IMR-90 (cell line): ENCODE measurements at regions of chr21 and their contacts with region 1.

Region 1: GRCh38 chr21:34888569-34889319 is 160.4 kb downstream of the RUNX1 start:
- DNase-seq: peak; percentile 96
- ATAC-seq: peak; percentile 62
- H3K4me3 ChIP-seq: peak overlapping the region; percentile 99
- H3K27ac ChIP-seq: peak overlapping the region; percentile 99
- H3K4me1 ChIP-seq: no peaks in the 10 kb centered on the region
- H3K27me3 ChIP-seq: no peaks in the 10 kb centered on the region
- CTCF ChIP-seq: no peak
- POLR2A ChIP-seq: peak; percentile 98
- RAD21 ChIP-seq: peak; percentile 25

Region 2: DNA sequence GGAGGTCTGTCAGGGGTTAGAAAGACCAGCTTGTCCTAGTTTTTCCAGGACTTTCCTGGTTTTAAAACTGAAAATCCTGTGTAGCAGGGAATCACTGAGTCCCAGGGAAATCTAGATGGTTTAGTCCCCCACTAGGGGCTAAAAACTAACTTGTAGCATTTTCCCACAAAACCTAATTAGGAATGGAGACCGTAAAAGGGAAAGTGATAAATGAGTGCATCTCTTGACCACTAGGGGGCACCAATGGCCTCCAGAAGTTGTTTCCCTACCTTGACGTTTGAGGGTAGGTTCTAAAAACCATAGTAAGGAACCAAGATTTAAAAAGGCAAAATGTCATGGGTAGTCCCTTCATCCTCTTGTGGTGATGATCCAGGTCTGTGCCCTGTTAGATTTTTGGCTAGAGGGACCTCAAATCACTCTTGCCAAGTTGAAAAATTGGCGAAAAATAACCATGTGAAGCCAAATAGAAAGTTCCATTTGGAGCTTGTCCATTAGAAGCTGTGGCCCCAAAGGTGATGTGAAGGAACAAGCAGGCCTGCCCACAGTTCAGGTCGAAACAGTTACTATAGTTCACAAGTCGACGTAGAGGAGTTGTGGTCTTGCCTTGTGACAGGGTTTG is 195.4 kb before region 1 on chr21:
- CTCF ChIA-PET with region 1: no interaction called
- POLR2A ChIA-PET with region 1: no interaction called
- dilution Hi-C with region 1: no loop called
- in situ Hi-C with region 1: no loop called
- intact Hi-C with region 1: loop called (anchors 2 kb)
- DNase-seq: peak; percentile 74
- ATAC-seq: peak; percentile 80
- H3K4me3 ChIP-seq: no peak overlapping the region
- H3K27ac ChIP-seq: no peak overlapping the region
- H3K4me1 ChIP-seq: no peaks in the 10 kb centered on the region
- H3K27me3 ChIP-seq: peaks cover 36% of the 10 kb centered on the region
- CTCF ChIP-seq: peak; percentile 84
- POLR2A ChIP-seq: no peak
- RAD21 ChIP-seq: peak; percentile 89

Region 3: GRCh38 chr21:34801519-34802132 is 87.1 kb before region 1 on chr21:
- CTCF ChIA-PET with region 1: no interaction called
- POLR2A ChIA-PET with region 1: no interaction called
- dilution Hi-C with region 1: no loop called
- in situ Hi-C with region 1: no loop called
- intact Hi-C with region 1: loop called (anchors 5 kb)
- DNase-seq: no peak
- ATAC-seq: no peak; the same call in 1 of the 2 replicates
- H3K4me3 ChIP-seq: no peak overlapping the region
- H3K27ac ChIP-seq: no peak overlapping the region
- H3K4me1 ChIP-seq: peaks cover 7% of the 10 kb centered on the region
- H3K27me3 ChIP-seq: no peaks in the 10 kb centered on the region
- CTCF ChIP-seq: peak; percentile 28; the same call in 1 of the 2 replicates
- POLR2A ChIP-seq: no peak
- RAD21 ChIP-seq: 0 out of 2 replicates have a peak, but pooled peaks have one; percentile 13

Region 4: GRCh38 chr21:34871026-34871908 is 17.5 kb before region 1 on chr21:
- CTCF ChIA-PET with region 1: no interaction called
- POLR2A ChIA-PET with region 1: no interaction called
- dilution Hi-C with region 1: no loop called
- in situ Hi-C with region 1: no loop called
- intact Hi-C with region 1: no loop called
- DNase-seq: no peak
- ATAC-seq: no peak
- H3K4me3 ChIP-seq: no peak overlapping the region
- H3K27ac ChIP-seq: no peak overlapping the region
- H3K4me1 ChIP-seq: peaks cover 28% of the 10 kb centered on the region
- H3K27me3 ChIP-seq: no peaks in the 10 kb centered on the region
- CTCF ChIP-seq: no peak
- POLR2A ChIP-seq: peak; percentile 17; the same call in 1 of the 2 replicates
- RAD21 ChIP-seq: no peak

Region 5: GRCh38 chr21:35084869-35085268 is 196.1 kb after region 1 on chr21:
- CTCF ChIA-PET with region 1: no interaction called
- POLR2A ChIA-PET with region 1: no interaction called
- dilution Hi-C with region 1: no loop called
- in situ Hi-C with region 1: no loop called
- intact Hi-C with region 1: loop called (anchors 2 kb)
- DNase-seq: peak; percentile 99
- ATAC-seq: peak; percentile 88
- H3K4me3 ChIP-seq: no peak overlapping the region
- H3K27ac ChIP-seq: peak overlapping the region; percentile 65; the same call in 1 of the 2 replicates
- H3K4me1 ChIP-seq: peaks cover 10% of the 10 kb centered on the region
- H3K27me3 ChIP-seq: no peaks in the 10 kb centered on the region
- CTCF ChIP-seq: peak; percentile 31
- POLR2A ChIP-seq: no peak
- RAD21 ChIP-seq: no peak

Region 6: GRCh38 chr21:35198031-35198431 is 309.3 kb after region 1 on chr21:
- CTCF ChIA-PET with region 1: no interaction called
- POLR2A ChIA-PET with region 1: no interaction called
- dilution Hi-C with region 1: no loop called
- in situ Hi-C with region 1: no loop called
- intact Hi-C with region 1: no loop called
- DNase-seq: peak; percentile 96
- ATAC-seq: peak; percentile 83
- H3K4me3 ChIP-seq: no peak overlapping the region
- H3K27ac ChIP-seq: no peak overlapping the region
- H3K4me1 ChIP-seq: peaks cover 7% of the 10 kb centered on the region
- H3K27me3 ChIP-seq: no peaks in the 10 kb centered on the region
- CTCF ChIP-seq: no peak
- POLR2A ChIP-seq: no peak
- RAD21 ChIP-seq: no peak

Region 7: GRCh38 chr21:35400233-35400957 is 511.7 kb after region 1 on chr21:
- CTCF ChIA-PET with region 1: no interaction called
- POLR2A ChIA-PET with region 1: no interaction called
- dilution Hi-C with region 1: no loop called
- in situ Hi-C with region 1: loop called (anchors 5 kb)
- intact Hi-C with region 1: loop called (anchors 1 kb)
- DNase-seq: peak; percentile 67
- ATAC-seq: peak; percentile 53; the same call in 1 of the 2 replicates
- H3K4me3 ChIP-seq: no peak overlapping the region
- H3K27ac ChIP-seq: no peak overlapping the region
- H3K4me1 ChIP-seq: peaks cover 8% of the 10 kb centered on the region
- H3K27me3 ChIP-seq: no peaks in the 10 kb centered on the region
- CTCF ChIP-seq: peak; percentile 61
- POLR2A ChIP-seq: 0 out of 2 replicates have a peak, but pooled peaks have one; percentile 25
- RAD21 ChIP-seq: peak; percentile 78

Region 8: GRCh38 chr21:35840197-35840799 is 951.6 kb after region 1 on chr21:
- CTCF ChIA-PET with region 1: interaction called, 3 read pairs
- POLR2A ChIA-PET with region 1: interaction called, 3 read pairs
- dilution Hi-C with region 1: no loop called
- in situ Hi-C with region 1: loop called (anchors 5 kb)
- intact Hi-C with region 1: loop called (anchors 1 kb)
- DNase-seq: peak; percentile 91
- ATAC-seq: peak; percentile 85
- H3K4me3 ChIP-seq: no peak overlapping the region
- H3K27ac ChIP-seq: no peak overlapping the region
- H3K4me1 ChIP-seq: no peaks in the 10 kb centered on the region
- H3K27me3 ChIP-seq: no peaks in the 10 kb centered on the region
- CTCF ChIP-seq: peak; percentile 94
- POLR2A ChIP-seq: 0 out of 2 replicates have a peak, but pooled peaks have one; percentile 29
- RAD21 ChIP-seq: peak; percentile 90

Region 9: GRCh38 chr21:36028127-36029069 is 1139.7 kb after region 1 on chr21:
- CTCF ChIA-PET with region 1: interaction called, 3 read pairs
- POLR2A ChIA-PET with region 1: no interaction called
- dilution Hi-C with region 1: no loop called
- in situ Hi-C with region 1: no loop called
- intact Hi-C with region 1: loop called (anchors 5 kb)
- DNase-seq: peak; percentile 73
- ATAC-seq: peak; percentile 97
- H3K4me3 ChIP-seq: no peak overlapping the region
- H3K27ac ChIP-seq: no peak overlapping the region
- H3K4me1 ChIP-seq: peaks cover 7% of the 10 kb centered on the region
- H3K27me3 ChIP-seq: no peaks in the 10 kb centered on the region
- CTCF ChIP-seq: peak; percentile 97
- POLR2A ChIP-seq: no peak
- RAD21 ChIP-seq: peak; percentile 98